PC-3 (cell line): ENCODE measurements at regions of chr1 and their contacts with region 1.

Region 1: GRCh38 chr1:228405987-228406265 is 709 bp downstream of the TRIM11 start:
- DNase-seq: no peak
- ATAC-seq: peak; percentile 19
- H3K4me3 ChIP-seq: peak overlapping the region; percentile 88
- H3K27ac ChIP-seq: peak overlapping the region; percentile 57
- H3K4me1 ChIP-seq: peaks cover 28% of the 10 kb centered on the region
- H3K27me3 ChIP-seq: no peaks in the 10 kb centered on the region
- CTCF ChIP-seq: no peak

Region 2: DNA sequence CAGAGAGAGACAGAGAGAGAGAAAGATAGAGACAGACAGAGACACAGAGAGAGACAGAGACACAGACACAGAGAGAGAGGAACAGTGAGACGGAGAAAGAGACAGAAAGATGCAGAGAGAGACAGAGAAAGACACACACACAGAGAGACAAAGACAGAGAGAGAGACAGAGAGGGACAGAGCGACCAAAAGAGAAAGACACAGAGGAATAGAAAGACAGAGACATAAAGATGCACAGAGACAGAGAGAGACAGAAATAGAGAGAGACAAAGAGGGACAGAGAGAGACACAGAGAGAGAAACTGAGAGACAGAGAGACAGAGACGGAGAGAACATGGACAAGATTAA is 382.7 kb before region 1 on chr1:
- CTCF ChIA-PET with region 1: no interaction called
- POLR2A ChIA-PET with region 1: interaction called, 18 read pairs
- intact Hi-C with region 1: no loop called
- DNase-seq: no peak
- ATAC-seq: no peak
- H3K4me3 ChIP-seq: no peak overlapping the region
- H3K27ac ChIP-seq: no peak overlapping the region
- H3K4me1 ChIP-seq: no peaks in the 10 kb centered on the region
- H3K27me3 ChIP-seq: peaks cover 5% of the 10 kb centered on the region; the same call in 1 of the 2 replicates
- CTCF ChIP-seq: no peak

Region 3: GRCh38 chr1:228139944-228140656 is 265.8 kb before region 1 on chr1 and contains the start of gene GUK1:
- CTCF ChIA-PET with region 1: no interaction called
- POLR2A ChIA-PET with region 1: no interaction called
- intact Hi-C with region 1: loop called (anchors 5 kb)
- DNase-seq: peak; percentile 100
- ATAC-seq: peak; percentile 91
- H3K4me3 ChIP-seq: peak within 1 kb of the TSS; percentile 84
- H3K27ac ChIP-seq: peak within 1 kb of the TSS; percentile 44
- H3K4me1 ChIP-seq: peaks cover 23% of the 10 kb centered on the region
- H3K27me3 ChIP-seq: no peaks in the 10 kb centered on the region
- CTCF ChIP-seq: peak; percentile 42
- total RNA-seq, gene GUK1: 996 and 1,117 TPM in 2 replicates

Region 4: DNA sequence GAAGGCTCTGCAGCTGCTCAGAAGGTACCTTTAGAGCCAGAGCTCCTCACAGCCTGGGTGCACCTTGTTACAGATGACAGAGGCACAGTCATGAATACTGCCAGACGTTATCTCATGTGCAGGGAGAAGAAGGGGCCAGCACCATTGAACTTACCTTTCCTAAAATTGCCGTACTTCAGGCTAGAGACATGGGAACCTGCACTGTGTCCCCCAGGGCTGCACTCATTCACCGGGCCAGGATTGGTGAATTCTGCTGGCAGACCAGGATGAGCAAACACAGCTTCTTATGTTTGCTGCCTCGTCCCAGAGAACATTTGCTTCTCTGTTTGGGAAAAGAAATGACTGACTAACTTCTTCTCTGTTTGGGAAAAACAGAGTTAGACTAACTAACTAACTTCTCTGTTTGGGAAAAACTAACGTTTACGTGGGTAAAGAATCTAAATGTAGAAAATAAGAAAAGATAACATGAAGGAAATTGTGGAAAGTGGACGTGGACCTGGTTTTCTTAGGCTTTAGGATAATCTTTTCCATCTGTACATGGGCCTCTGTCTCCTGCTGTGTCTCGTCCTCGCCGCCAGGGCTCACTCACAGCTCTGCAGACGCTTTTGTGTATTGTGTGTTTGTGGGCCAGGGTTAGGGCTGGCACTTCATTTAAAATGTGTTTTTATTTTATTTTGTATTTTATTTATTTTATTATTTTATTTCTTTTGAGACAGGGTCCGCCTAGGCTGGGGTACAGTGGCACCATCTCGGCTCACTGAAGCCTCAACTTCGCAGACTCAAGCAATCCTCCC is 188.2 kb before region 1 on chr1:
- CTCF ChIA-PET with region 1: no interaction called
- POLR2A ChIA-PET with region 1: no interaction called
- intact Hi-C with region 1: no loop called
- DNase-seq: no peak
- ATAC-seq: no peak
- H3K4me3 ChIP-seq: no peak overlapping the region
- H3K27ac ChIP-seq: no peak overlapping the region
- H3K4me1 ChIP-seq: no peaks in the 10 kb centered on the region
- H3K27me3 ChIP-seq: no peaks in the 10 kb centered on the region
- CTCF ChIP-seq: no peak

Region 5: GRCh38 chr1:228358039-228358763 is 47.7 kb before region 1 on chr1:
- CTCF ChIA-PET with region 1: no interaction called
- POLR2A ChIA-PET with region 1: no interaction called
- intact Hi-C with region 1: no loop called
- DNase-seq: peak; percentile 46
- ATAC-seq: peak; percentile 41
- H3K4me3 ChIP-seq: no peak overlapping the region
- H3K27ac ChIP-seq: no peak overlapping the region
- H3K4me1 ChIP-seq: no peaks in the 10 kb centered on the region; the same call in 1 of the 2 replicates
- H3K27me3 ChIP-seq: no peaks in the 10 kb centered on the region
- CTCF ChIP-seq: no peak

Region 6: GRCh38 chr1:228378090-228378872 is 27.6 kb before region 1 on chr1:
- CTCF ChIA-PET with region 1: interaction called, 17 read pairs
- POLR2A ChIA-PET with region 1: no interaction called
- intact Hi-C with region 1: no loop called
- DNase-seq: peak; percentile 62
- ATAC-seq: peak; percentile 76
- H3K4me3 ChIP-seq: peak overlapping the region; percentile 68
- H3K27ac ChIP-seq: no peak overlapping the region
- H3K4me1 ChIP-seq: peaks cover 19% of the 10 kb centered on the region
- H3K27me3 ChIP-seq: no peaks in the 10 kb centered on the region
- CTCF ChIP-seq: peak; percentile 76